ENCODE measurements at regions of chr7 and their contacts with region 1.

Region 1: GRCh38 chr7:1123715-1124114 is 35.8 kb downstream of the GPER1 start:
- DNase-seq: peak; percentile 86
- ATAC-seq: peak; percentile 96
- H3K4me3 Mint-ChIP-seq: no peak overlapping the region
- H3K27ac Mint-ChIP-seq: peak overlapping the region; percentile 84; the same call in 1 of the 2 replicates
- H3K4me1 Mint-ChIP-seq: peaks cover 8% of the 10 kb centered on the region
- H3K27me3 Mint-ChIP-seq: no peaks in the 10 kb centered on the region
- CTCF ChIP-seq: no peak

Region 2: GRCh38 chr7:1044191-1045068 is 79.3 kb before region 1 on chr7 and contains the start of gene GPR146:
- CTCF ChIA-PET with region 1: interaction called, 11 read pairs
- POLR2A ChIA-PET with region 1: no interaction called
- DNase-seq: peak; percentile 99
- ATAC-seq: peak; percentile 93
- H3K4me3 Mint-ChIP-seq: peak within 1 kb of the TSS; percentile 71
- H3K27ac Mint-ChIP-seq: peak within 1 kb of the TSS; percentile 97
- H3K4me1 Mint-ChIP-seq: peaks cover 31% of the 10 kb centered on the region
- H3K27me3 Mint-ChIP-seq: no peaks in the 10 kb centered on the region
- CTCF ChIP-seq: 0 out of 2 replicates have a peak, but pooled peaks have one; percentile 18
- total RNA-seq, gene GPR146: 0.87 to 1.1 TPM (median 0.92 TPM) in 3 replicates

Region 3: GRCh38 chr7:1086588-1087464 is 36.9 kb before region 1 on chr7:
- CTCF ChIA-PET with region 1: interaction called, 19 read pairs
- POLR2A ChIA-PET with region 1: no interaction called
- DNase-seq: peak; percentile 88
- ATAC-seq: peak; percentile 89
- H3K4me3 Mint-ChIP-seq: peak overlapping the region; percentile 63
- H3K27ac Mint-ChIP-seq: no peak overlapping the region
- H3K4me1 Mint-ChIP-seq: peaks cover 20% of the 10 kb centered on the region
- H3K27me3 Mint-ChIP-seq: no peaks in the 10 kb centered on the region
- CTCF ChIP-seq: peak; percentile 91

Region 4: DNA sequence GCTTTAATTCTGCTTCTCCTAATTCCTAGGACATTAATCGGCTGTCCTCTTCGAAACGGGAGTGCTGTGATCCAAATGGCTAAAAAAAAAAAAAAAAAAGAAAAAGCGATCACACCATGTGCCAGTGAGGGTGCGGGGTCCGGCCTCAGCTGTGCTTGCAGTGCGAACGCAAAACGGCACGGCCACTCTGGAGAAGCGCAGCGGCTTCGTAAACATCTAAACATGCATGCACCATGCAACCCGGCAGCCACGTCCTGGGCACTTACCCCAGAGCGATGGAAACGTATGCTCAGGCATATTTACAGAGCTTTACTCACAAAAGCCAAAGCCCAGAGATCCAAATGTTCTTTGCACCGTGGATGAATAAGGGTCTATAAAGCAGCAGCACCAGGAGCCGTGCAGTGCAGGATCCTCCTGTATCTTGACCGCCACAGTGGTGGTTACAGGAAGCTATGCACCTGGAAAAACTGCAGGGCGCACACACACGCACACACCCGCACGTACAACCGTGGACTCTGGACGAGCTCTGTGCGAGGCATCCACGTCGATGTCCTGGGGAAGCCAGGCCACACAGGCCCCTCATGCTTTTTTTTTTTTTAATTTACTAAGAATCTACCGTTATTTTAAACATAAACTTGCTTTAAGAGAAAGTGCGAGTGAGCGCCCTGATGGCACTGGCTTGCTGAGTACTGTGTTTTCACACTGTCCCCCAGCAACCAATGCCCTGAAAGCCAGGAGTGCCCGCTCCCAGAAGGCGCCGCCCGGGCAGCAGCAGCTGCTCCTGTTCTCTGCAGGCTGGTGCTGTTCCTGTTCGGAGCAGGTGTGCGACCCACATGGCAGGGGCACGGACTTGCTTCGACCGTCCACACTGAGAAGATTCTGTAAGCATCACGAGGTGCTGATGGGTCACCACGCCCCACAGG is 10.8 kb before region 1 on chr7:
- CTCF ChIA-PET with region 1: interaction called, 13 read pairs
- POLR2A ChIA-PET with region 1: no interaction called
- DNase-seq: no peak
- ATAC-seq: no peak
- H3K4me3 Mint-ChIP-seq: no peak overlapping the region
- H3K27ac Mint-ChIP-seq: no peak overlapping the region
- H3K4me1 Mint-ChIP-seq: no peaks in the 10 kb centered on the region
- H3K27me3 Mint-ChIP-seq: no peaks in the 10 kb centered on the region
- CTCF ChIP-seq: no peak

Region 5: DNA sequence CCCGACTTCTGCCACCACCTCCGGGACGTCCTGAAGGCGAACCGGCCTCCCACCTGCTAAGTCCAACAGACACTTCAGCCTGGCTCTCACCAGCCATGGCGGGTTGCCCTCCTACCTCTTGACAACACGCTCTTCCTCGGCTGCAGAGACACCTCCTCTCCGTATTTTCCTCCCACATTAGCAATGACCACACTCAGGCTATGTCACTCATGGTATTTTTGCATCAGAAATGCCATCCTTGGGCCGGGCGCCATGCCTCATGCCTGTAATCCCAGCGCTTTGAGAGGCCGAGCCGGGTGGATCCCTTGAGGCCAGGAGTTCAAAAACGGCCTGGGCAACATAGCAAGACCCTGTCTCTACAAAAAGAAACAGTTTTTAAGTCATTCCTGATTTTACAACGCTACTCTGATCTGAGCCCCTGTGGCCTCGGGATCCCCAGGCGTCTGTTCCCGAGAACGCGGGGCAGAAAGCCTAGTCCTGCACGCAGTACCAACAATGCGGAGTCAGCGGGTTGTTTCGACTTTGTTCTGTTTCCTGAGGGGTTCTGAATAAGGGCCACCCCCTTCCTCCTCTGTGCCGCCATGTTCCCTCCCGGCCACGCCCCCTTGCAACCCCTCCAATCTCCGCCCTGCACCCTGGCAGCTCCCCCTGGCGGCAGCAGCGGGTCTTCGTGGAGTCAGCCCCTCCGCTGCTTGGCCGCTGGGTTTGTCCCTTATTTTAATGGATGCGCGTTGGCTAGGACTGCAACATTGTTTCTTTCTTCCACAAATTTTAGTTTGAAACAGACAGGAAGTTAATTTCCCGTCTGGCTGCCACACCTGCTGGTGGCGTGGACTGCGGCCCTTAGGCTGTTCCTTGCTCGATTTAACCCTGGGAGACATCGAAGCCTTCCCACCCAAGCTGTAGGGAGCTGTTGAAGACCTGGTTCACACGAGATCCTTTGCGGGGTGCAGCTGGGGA is 46.0 kb after region 1 on chr7:
- CTCF ChIA-PET with region 1: interaction called, 13 read pairs
- POLR2A ChIA-PET with region 1: no interaction called
- DNase-seq: peak; percentile 95
- ATAC-seq: peak; percentile 99
- H3K4me3 Mint-ChIP-seq: peak overlapping the region; percentile 61
- H3K27ac Mint-ChIP-seq: peak overlapping the region; percentile 42; the same call in 1 of the 2 replicates
- H3K4me1 Mint-ChIP-seq: peaks cover 8% of the 10 kb centered on the region
- H3K27me3 Mint-ChIP-seq: 0 out of 2 replicates have a peak, but pooled peaks cover 3% of the 10 kb centered on the region
- CTCF ChIP-seq: peak; percentile 80

Region 6: DNA sequence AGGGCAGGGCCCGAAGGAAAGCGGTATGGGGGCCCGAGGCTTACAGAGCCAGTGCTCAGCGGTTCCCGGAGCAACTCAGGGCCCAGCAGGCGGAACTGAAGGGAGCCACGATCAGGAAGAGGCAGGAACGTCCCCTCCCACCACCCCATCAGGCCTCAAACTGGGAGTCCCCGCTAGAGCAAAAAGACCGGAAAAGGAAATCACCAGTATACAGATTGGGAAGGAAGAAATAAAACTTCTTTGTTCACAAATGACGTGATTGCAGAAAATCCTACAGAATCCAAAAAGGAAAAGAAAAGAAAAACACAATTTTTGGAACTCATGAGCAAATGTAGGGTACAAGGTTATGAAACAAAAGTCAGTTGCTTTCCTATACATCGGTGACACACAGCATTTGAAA is 57.9 kb after region 1 on chr7:
- CTCF ChIA-PET with region 1: interaction called, 22 read pairs
- POLR2A ChIA-PET with region 1: no interaction called
- DNase-seq: no peak
- ATAC-seq: no peak
- H3K4me3 Mint-ChIP-seq: no peak overlapping the region
- H3K27ac Mint-ChIP-seq: no peak overlapping the region
- H3K4me1 Mint-ChIP-seq: no peaks in the 10 kb centered on the region
- H3K27me3 Mint-ChIP-seq: peaks cover 9% of the 10 kb centered on the region
- CTCF ChIP-seq: no peak

Region 7: GRCh38 chr7:1225441-1226185 is 101.9 kb after region 1 on chr7:
- CTCF ChIA-PET with region 1: no interaction called
- POLR2A ChIA-PET with region 1: no interaction called
- DNase-seq: peak; percentile 68
- ATAC-seq: peak; percentile 13; the same call in 1 of the 2 replicates
- H3K4me3 Mint-ChIP-seq: peak overlapping the region; percentile 52
- H3K27ac Mint-ChIP-seq: no peak overlapping the region
- H3K4me1 Mint-ChIP-seq: peaks cover 33% of the 10 kb centered on the region
- H3K27me3 Mint-ChIP-seq: peaks cover 95% of the 10 kb centered on the region
- CTCF ChIP-seq: peak; percentile 82

Region 8: DNA sequence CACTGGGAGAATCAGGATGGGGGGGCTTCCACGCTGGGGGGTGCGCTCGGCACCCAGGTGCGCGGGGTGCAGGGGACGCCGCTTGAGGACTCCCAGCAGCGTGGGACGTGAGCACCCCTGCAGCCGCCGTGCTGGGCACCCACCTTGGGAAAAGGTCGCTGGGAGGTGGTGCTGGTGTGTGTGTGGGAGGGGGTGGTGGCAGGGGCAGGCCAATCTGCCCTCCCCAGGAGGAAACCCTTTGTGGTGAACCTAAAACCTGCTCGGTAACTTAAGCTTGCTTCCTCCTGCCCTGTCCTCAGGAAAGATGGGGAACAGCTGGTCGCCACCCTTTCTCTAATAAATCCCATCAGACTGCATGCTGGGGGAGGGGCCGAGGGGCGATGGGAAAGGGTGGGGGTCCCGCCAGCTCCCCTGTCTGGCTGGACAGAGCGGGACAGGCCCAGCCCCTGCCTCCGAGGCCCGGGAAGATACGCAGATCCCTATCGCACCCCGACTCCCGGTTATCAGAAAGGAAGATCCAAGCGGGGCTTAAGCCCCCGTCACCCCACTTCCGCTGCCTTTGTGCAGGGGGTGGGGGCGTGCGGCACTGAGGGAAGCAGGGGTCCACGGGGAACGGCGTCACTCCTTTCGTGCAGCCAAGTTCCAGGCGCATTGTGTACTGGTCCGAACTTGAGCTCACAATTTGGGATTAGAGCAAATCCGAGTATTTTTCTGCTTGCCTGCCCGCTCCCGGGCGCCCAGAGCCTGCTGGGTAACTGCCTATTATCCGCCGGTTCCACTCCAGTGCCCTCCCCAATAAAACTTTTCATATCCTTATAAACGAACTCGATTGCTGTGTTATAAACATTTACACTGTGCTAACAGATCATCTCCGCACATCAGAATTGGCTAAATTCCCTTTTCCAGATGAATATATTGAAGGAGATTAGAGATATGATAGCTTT is 173.6 kb after region 1 on chr7:
- CTCF ChIA-PET with region 1: no interaction called
- POLR2A ChIA-PET with region 1: no interaction called
- DNase-seq: no peak
- ATAC-seq: no peak
- H3K4me3 Mint-ChIP-seq: no peak overlapping the region
- H3K27ac Mint-ChIP-seq: no peak overlapping the region
- H3K4me1 Mint-ChIP-seq: no peaks in the 10 kb centered on the region
- H3K27me3 Mint-ChIP-seq: no peaks in the 10 kb centered on the region
- CTCF ChIP-seq: no peak